Tibial artery (tissue), 4 donors: ENCODE measurements at regions of chr5 and their contacts with region 1.

Region 1: DNA sequence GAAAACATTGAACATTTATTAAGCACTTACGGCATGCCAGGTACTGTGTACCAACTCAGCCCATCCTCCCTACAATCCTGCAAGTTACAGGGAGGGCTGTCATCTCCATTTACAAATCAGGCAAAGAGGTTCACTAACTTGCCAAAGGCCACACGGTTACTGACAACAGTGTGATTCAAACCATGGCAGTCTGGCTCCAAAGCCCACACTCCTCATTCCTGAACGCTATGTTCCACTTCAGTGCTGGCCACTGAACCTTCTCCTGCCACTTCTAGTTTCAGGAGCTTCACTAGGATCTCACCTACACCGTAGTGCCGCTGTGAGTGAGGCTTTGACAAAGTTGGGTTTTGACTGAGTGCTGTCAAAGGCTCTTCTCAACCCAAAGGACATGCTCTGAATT is 7.2 kb upstream of the LIFR start:
- DNase-seq: no peak
- H3K4me3 ChIP-seq: no peak overlapping the region
- H3K27ac ChIP-seq: no peak overlapping the region
- H3K4me1 ChIP-seq: no peaks in the 10 kb centered on the region
- H3K27me3 ChIP-seq: no peaks in the 10 kb centered on the region
- CTCF ChIP-seq: no peak

Region 2: GRCh38 chr5:38420691-38421390 is 142.8 kb before region 1 on chr5:
- intact Hi-C with region 1: no loop called
- DNase-seq: peak; percentile 55 to 76
- H3K4me3 ChIP-seq: no peak overlapping the region
- H3K27ac ChIP-seq: peak overlapping the region; percentile 37 to 45
- H3K4me1 ChIP-seq: peaks cover 0 to 32% (median 13%) of the 10 kb centered on the region in 4 donors
- H3K27me3 ChIP-seq: no peaks in the 10 kb centered on the region
- CTCF ChIP-seq: peak; percentile 65 to 69

Region 3: DNA sequence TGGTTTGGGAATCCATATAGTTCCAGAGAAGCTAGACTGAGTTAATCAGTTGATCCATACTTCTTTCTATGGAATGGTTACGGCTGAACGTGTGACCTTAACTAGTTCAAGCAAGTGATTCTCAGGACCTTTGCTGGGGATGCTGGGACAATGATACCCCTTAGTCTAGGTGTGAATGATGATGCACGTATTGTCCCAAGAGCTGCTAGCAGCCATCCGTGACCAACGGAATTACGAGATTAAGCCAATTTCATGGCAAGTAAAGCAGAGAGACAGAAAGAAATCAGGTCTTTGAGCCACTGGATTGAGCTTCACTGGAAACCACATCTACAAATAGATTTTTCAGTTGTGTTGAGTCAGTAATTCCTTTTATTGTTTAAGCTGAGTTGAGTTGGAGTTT is 92.1 kb after region 1 on chr5:
- intact Hi-C with region 1: loop called (anchors 5 kb)
- DNase-seq: no peak
- H3K4me3 ChIP-seq: no peak overlapping the region
- H3K27ac ChIP-seq: no peak overlapping the region
- H3K4me1 ChIP-seq: peaks cover 0 to 9% (median 0%) of the 10 kb centered on the region in 4 donors
- H3K27me3 ChIP-seq: no peaks in the 10 kb centered on the region
- CTCF ChIP-seq: no peak